ENCODE measurements at regions of chr15 and their contacts with region 1.

Region 1: DNA sequence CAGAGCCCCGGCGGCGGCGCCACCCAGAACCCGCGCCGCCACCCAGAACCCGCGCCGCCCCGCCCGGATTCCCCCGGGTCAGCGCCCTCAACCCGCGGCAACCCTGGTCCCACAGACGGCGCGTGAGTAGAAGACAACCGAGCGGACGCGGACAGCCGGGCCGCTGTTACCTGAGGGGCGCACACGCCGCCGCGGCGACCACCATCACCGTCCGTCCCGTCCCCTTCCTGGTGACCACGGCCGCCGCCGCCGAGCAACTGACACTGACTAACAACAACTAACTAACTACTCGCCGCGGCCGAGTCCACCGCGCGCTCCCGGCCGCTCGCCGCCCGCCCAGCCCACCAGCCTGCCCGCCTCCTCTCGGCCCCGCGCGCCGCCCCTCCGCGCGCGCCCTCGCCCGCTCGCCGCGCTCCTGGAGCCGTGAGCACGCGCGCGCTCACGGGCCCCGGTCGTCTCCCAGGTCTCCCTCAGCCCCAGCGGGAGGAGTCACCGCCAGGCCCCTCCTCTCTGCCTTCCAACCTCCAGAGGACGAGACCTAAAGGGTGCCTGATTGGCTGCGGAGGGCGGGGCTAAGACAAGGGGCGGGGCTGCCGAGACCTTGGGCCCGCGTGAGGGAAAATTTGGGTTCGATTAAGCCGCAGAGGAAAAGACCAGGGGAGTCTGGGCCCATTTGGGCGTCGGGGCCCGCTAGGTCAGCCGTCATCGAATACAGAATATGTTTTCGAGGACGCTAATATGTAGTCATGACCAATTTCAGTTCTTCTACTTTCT is at the start of gene PEAK1:
- DNase-seq: peak; percentile 99 to 100
- ATAC-seq: peak; percentile 88 to 91
- H3K4me3 ChIP-seq: peak within 1 kb of the TSS; percentile 77 to 91 (median 84)
- H3K27ac ChIP-seq: peak within 1 kb of the TSS; percentile 87 to 98 (median 97)
- H3K4me1 ChIP-seq: peaks cover 52 to 69% of the 10 kb centered on the region in 2 donors
- H3K27me3 ChIP-seq: no peaks in the 10 kb centered on the region
- CTCF ChIP-seq: peak in 1 of 5 experiments; percentile 5
- POLR2A ChIP-seq: peak; percentile 96
- total RNA-seq, gene PEAK1: 17.8 to 21.9 (median 20.8) TPM

Region 2: DNA sequence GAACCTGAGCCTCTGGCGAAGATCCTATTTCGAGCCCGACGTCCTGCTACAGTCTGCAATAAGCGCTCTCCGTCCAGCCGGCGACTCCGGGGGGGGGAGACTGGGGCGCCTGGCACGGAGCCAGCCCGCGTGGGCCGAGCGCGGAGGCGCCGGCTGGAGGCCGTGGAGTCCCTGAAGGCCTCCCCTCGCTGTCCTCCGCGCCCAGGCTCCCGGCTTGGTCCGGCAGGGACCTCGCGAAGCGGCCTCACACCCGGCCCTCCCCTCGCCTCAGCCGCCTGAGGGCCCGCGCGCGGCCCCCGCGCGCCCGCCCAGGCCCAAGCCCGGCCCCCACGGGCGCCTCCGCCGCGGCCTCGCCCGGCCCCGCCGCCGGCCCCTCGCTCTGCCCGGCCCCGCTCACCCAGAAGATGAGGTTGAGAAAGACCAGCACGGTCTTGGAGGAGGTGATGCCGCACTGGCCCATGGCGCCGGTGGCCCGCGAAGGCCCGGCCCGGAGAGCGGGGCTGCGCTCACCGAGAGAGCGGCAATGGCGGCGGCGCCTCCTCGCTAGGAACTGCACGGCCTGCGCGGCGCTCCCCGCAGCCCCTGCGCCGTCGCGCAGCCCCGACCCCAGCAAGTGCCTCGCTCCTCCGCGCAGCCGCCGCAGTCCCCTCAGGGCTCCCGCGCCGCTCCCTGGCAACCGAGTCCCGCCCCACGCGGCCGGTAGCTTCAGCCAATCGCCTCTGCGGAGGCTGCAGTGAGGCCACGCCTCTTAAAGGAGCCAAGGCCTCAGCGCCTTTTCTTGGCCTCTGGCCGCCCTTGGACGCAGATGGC is 349.3 kb before region 1 on chr15 and contains the start of gene TSPAN3:
- in situ Hi-C with region 1: no loop called
- intact Hi-C with region 1: loop called (anchors 5 kb)
- DNase-seq: peak; percentile 88 to 93
- ATAC-seq: peak; percentile 91
- H3K4me3 ChIP-seq: peak within 1 kb of the TSS; percentile 61 to 84 (median 70)
- H3K27ac ChIP-seq: peak within 1 kb of the TSS; percentile 88 to 97 (median 92)
- H3K4me1 ChIP-seq: peaks cover 31 to 45% of the 10 kb centered on the region in 2 donors
- H3K27me3 ChIP-seq: no peaks in the 10 kb centered on the region
- CTCF ChIP-seq: no peak
- POLR2A ChIP-seq: peak; percentile 95 to 97
- total RNA-seq, gene TSPAN3: 229 to 361 (median 341) TPM

Region 3: DNA sequence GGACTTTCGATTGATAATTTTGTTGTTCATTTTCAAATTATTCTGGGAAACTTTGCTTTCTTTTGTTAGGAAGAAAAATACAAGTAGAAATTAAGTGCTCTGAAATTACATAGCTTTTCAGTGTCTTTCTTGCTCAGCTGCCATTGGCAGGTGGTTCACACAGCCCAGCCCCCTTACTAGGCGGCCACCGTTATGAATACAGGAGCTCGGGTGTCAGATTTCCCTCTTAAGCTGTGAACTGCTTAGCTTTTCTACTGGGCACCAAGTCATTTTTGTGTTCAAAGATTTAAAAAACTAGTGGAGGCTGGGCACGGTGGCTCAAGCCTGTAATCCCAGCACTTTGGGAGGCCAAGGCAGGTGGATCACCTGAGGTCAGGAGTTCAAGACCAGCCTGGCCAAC is 55.9 kb after region 1 on chr15:
- in situ Hi-C with region 1: no loop called
- intact Hi-C with region 1: loop called (anchors 5 kb)
- DNase-seq: no peak
- ATAC-seq: peak in 1 of 2 donors; percentile 52
- H3K4me3 ChIP-seq: no peak overlapping the region
- H3K27ac ChIP-seq: peak overlapping the region in 2 of 4 donors; percentile 28 to 39
- H3K4me1 ChIP-seq: peaks cover 15 to 20% of the 10 kb centered on the region in 2 donors
- H3K27me3 ChIP-seq: no peaks in the 10 kb centered on the region
- CTCF ChIP-seq: no peak
- POLR2A ChIP-seq: no peak

Measured in gastrocnemius medialis (tissue), 4 donors.